MCF 10A (cell line): ENCODE measurements at regions of chr6 and their contacts with region 1.

Region 1: GRCh38 chr6:75934643-75935472 is 137.6 kb downstream of the IMPG1 start:
- DNase-seq: peak; percentile 81
- H3K4me3 Mint-ChIP-seq: peak overlapping the region; percentile 61
- H3K27ac Mint-ChIP-seq: no peak overlapping the region
- H3K4me1 Mint-ChIP-seq: peaks cover 10% of the 10 kb centered on the region
- H3K27me3 Mint-ChIP-seq: no peaks in the 10 kb centered on the region
- CTCF ChIP-seq: peak; percentile 61

Region 2: DNA sequence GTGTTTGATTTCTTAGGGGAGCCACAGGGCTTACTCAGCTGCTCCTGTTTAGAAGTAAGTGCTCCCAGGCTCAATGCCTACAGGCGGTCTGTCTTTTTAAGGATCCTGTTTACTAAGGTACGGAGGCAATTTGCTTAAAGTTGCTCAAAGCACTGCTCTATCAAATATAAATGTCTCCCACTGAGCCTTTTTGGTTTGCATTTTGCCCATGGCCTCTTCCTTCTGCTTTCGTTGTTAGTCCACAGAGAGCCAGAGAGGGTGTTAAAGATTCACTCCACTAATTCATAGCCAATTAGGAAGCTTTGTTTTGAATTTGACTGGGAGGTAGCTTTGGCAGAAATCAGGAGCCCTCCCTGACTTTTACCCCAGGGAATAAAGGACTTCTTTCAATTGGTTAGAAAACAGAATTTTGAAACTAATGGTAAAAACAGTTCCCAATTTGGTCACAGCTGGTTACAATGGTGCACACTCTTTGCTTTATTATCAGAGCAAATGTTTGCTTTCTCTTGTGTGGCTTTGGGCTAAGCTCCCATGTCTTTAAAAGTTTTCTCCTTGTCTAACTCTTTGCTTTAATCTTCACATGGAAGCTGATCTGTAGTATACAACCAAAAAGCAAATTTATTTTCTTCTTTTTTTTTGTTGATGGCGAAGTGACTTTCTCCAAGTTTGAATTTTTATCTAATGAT is 11.4 kb after region 1 on chr6:
- CTCF ChIA-PET with region 1: interaction called, 23 read pairs
- POLR2A ChIA-PET with region 1: no interaction called
- intact Hi-C with region 1: no loop called
- DNase-seq: no peak
- H3K4me3 Mint-ChIP-seq: no peak overlapping the region
- H3K27ac Mint-ChIP-seq: no peak overlapping the region
- H3K4me1 Mint-ChIP-seq: no peaks in the 10 kb centered on the region
- H3K27me3 Mint-ChIP-seq: no peaks in the 10 kb centered on the region
- CTCF ChIP-seq: no peak

Region 3: DNA sequence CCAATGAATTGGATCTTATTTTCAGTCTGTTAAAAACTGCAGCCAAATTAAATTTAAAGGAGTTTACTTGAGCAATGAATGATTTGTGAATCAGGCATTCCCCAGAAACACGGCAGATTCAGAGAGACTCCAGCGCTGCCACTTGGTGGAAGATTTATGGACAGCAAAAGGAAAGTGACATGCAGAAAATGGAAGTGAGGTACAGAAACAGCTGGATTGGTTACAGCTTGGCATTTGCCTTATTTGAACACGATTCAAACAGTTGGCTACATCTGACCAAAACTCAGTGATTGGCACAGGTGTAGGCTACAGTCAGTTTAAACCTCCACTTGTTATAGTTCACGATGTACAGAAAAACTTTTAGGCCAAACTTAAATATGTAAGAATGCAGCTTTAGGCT is 395.2 kb after region 1 on chr6:
- CTCF ChIA-PET with region 1: interaction called, 3 read pairs
- POLR2A ChIA-PET with region 1: no interaction called
- intact Hi-C with region 1: loop called (anchors 5 kb)
- DNase-seq: no peak
- H3K4me3 Mint-ChIP-seq: no peak overlapping the region
- H3K27ac Mint-ChIP-seq: no peak overlapping the region
- H3K4me1 Mint-ChIP-seq: no peaks in the 10 kb centered on the region
- H3K27me3 Mint-ChIP-seq: no peaks in the 10 kb centered on the region
- CTCF ChIP-seq: no peak

Region 4: GRCh38 chr6:76612954-76613353 is 678.1 kb after region 1 on chr6:
- CTCF ChIA-PET with region 1: no interaction called
- POLR2A ChIA-PET with region 1: no interaction called
- intact Hi-C with region 1: loop called (anchors 10 kb)
- DNase-seq: no peak
- H3K4me3 Mint-ChIP-seq: no peak overlapping the region
- H3K27ac Mint-ChIP-seq: no peak overlapping the region
- H3K4me1 Mint-ChIP-seq: peaks cover 5% of the 10 kb centered on the region
- H3K27me3 Mint-ChIP-seq: no peaks in the 10 kb centered on the region
- CTCF ChIP-seq: no peak

Region 5: DNA sequence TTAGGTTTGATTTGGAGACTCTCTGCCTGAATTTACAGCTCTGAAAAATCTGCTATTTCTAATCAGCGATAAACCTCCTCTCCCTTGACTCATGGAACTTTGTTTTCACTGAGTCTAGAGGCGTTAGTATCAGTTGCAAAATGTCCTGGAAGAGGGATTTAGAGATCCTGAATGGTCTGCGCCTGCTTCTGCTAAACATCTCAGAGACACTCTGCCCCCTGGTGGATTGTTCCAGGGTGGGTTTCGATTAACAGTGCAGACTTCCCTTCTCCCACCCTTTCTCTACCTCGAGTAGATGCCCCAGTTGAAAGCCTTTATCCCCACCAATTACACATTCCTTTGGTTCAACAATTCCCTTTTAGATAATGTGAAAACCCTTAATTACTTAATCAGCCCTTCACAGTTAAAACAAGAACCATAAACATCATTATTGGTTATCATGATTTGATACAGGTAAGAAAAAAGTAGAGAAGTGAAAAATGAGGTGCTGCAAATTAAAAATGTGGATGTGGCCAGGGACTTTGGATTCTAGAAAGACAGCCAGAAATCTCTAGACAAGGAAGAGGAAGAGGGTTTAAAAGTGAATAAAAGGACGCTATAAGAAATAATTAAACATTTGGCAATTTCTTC is 1523.0 kb after region 1 on chr6:
- CTCF ChIA-PET with region 1: interaction called, 14 read pairs
- POLR2A ChIA-PET with region 1: no interaction called
- intact Hi-C with region 1: loop called (anchors 1 kb)
- DNase-seq: peak; percentile 95
- H3K4me3 Mint-ChIP-seq: no peak overlapping the region
- H3K27ac Mint-ChIP-seq: peak overlapping the region; percentile 4
- H3K4me1 Mint-ChIP-seq: peaks cover 11% of the 10 kb centered on the region
- H3K27me3 Mint-ChIP-seq: no peaks in the 10 kb centered on the region
- CTCF ChIP-seq: peak; percentile 54